ENCODE measurements at regions of chr20 and their contacts with region 1.

Region 1: DNA sequence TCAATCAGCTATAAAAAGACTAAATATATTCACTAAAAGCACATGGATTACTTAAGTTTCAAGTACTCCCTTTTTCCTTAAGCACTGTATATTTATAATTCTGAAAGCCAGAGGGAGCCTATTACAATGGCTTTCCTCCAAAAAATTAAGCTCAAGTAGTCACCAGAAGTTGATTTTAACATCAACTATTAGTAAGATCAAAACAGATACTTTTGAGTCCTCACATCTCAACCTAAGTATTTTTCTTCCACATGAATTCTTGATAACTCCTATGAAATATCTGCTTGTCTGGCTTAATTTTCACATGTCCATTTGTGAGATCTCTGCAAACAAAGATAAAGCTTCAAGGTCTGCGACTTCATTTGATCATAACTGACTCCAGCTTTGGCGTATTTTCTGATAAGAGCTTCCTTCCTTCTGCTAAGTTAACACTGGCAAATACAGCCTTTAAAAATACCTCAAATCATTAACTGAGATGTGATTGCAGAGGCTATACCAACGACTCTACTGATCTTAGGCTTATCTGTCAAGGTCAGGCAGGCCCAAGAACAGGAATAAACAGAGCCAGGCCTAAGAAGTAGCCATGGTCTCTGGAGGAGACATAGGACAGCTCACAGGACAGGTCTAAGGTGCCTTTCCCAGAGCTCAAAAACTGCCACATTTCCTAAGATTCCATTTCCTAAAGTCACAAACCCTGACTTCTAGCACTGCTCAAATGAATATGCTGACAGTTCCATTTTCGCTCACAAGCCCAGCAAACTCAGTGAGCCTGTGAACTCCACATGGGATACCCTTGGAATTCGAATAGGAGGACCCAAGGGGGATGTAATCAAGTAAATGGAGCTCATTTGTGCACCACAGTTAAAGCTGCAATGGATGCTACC is 10.0 kb downstream of the SNX5 start:
- DNase-seq: no peak
- H3K4me3 Mint-ChIP-seq: no peak overlapping the region
- H3K27ac Mint-ChIP-seq: peak overlapping the region; percentile 82
- H3K4me1 Mint-ChIP-seq: peaks cover 33% of the 10 kb centered on the region
- H3K27me3 Mint-ChIP-seq: no peaks in the 10 kb centered on the region
- CTCF ChIP-seq: no peak

Region 2: GRCh38 chr20:17752459-17752858 is 206.2 kb before region 1 on chr20:
- CTCF ChIA-PET with region 1: no interaction called
- POLR2A ChIA-PET with region 1: no interaction called
- intact Hi-C with region 1: no loop called
- DNase-seq: no peak
- H3K4me3 Mint-ChIP-seq: no peak overlapping the region
- H3K27ac Mint-ChIP-seq: no peak overlapping the region
- H3K4me1 Mint-ChIP-seq: peaks cover 4% of the 10 kb centered on the region
- H3K27me3 Mint-ChIP-seq: peaks cover 46% of the 10 kb centered on the region
- CTCF ChIP-seq: no peak

Region 3: DNA sequence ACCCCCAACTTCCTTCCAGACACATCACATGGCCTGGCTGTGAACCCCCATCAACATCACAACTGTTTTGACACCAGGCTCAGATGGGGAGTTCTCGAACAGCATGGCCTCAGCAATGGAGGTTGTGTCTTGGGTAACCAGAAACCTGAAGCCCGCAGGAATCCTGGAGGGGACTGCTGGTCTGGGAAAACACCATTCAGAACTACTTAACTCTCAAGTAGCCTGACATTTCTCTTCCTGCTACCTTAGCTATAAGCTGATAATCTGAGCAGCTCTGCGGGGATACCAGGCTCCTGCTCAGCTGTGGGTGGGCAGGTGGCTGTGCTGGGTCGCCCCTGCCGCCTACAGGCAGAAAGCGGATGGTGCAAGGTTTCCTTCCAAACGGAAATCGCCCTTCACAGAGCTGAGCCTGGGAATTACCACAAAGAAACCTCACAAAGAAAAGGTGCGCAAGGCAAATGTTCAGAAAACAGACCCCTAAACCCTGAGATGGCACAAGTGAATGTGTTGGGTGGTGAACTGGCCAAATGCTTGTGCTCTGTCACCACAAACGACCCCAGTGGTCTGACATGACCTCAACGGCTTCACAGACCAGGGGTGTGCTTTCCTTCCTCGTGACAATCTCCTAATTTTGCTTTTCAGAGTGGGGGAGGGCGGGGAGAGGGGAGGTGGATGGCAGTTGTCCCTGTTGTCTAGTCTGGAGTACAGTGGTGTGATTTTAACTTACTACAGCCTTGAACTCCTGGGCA is 19.6 kb before region 1 on chr20:
- CTCF ChIA-PET with region 1: interaction called, 11 read pairs
- POLR2A ChIA-PET with region 1: interaction called, 3 read pairs
- intact Hi-C with region 1: no loop called
- DNase-seq: peak; percentile 57
- H3K4me3 Mint-ChIP-seq: no peak overlapping the region
- H3K27ac Mint-ChIP-seq: no peak overlapping the region
- H3K4me1 Mint-ChIP-seq: no peaks in the 10 kb centered on the region
- H3K27me3 Mint-ChIP-seq: no peaks in the 10 kb centered on the region
- CTCF ChIP-seq: peak; percentile 54

Region 4: DNA sequence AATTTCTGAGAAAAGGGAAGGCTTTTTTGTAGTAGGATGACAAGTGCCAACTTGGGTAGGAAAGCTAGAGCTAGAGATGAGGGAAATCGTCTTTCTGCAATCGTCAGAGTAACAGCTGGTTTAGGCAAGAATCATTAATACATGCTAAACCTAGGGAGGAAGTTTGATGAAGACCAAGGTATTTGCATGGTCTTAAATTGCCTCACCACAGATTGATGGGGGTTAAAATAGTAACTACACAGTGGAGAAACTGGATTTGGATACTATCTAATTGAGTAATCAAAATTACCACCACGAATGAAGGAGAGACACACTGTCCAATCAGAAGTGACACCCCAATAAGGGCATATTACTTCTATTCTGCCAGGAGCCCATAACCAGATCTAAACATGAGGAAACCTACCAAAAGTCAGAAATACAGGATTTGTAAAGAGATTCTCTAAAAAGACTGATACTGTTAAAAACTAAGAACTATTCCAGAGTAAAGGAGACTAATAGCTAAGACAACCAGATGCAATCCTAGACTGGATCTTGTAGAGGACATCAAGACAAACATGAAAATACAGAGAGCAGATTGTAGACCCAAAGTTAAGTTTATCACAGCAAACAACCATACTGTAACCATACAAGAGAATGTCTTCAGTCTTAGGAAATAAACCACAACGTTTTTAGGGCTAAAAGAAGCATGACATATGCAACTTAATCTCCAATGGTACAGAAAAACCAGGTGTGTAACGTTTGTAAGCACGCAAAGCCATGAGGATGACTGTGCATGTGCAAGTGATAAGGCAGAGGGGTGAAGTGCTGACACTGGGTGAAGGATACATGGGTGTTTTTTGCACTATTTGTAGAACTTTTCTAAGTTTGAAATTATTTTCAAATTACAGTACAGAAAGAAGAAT is 11.8 kb before region 1 on chr20:
- CTCF ChIA-PET with region 1: interaction called, 16 read pairs
- POLR2A ChIA-PET with region 1: interaction called, 19 read pairs
- intact Hi-C with region 1: no loop called
- DNase-seq: no peak
- H3K4me3 Mint-ChIP-seq: no peak overlapping the region
- H3K27ac Mint-ChIP-seq: peak overlapping the region; percentile 22
- H3K4me1 Mint-ChIP-seq: no peaks in the 10 kb centered on the region
- H3K27me3 Mint-ChIP-seq: no peaks in the 10 kb centered on the region
- CTCF ChIP-seq: no peak